ENCODE measurements at regions of chr11 and their contacts with region 1.

Region 1: DNA sequence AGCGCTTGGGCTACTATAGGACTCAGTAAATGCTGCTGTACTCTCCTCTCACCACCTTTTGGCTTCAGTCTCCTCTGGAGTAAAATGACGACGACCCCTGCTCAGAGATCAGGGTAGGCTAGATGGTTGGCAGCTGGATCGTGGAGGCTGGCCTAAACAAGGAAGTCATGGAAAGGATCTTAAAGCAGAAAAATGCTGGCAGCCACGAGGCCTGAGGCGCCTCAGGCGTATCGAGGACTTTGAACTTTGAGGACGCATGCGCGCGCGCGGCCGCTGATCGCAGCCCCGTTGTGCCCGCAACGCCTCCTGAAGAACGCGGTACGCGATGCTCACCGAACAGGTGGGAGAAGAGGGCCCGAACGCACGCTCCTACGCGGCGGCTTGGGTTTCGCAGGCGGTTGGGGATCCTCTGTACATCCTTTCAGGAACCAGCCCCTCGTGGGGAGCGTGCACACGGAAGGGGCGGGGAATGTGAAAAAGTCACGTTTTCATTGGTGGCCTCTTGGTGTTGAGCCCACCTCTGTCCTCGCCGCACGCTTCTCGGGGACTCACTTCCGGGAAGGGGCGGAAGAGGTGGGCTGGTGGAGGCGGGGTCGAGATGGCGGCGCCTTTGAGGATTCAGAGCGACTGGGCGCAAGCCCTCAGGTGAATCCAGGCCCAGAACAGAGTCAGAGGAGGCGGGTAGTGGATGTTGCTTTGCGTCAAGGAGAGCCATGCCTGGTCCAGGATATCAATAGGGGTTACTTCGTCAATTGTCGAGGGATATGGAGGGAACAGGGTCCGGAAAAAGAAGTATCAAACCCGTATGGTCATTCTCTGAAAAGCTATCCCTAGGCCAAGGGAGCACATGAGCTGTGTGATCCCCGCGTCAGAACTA is at the starts of genes COA4 and PAAF1:
- DNase-seq: peak; percentile 97
- H3K4me3 Mint-ChIP-seq: peak within 1 kb of the TSS; percentile 97
- H3K27ac Mint-ChIP-seq: peak within 1 kb of the TSS; percentile 94
- H3K4me1 Mint-ChIP-seq: peaks cover 33% of the 10 kb centered on the region
- H3K27me3 Mint-ChIP-seq: no peaks in the 10 kb centered on the region
- total RNA-seq, gene COA4: 89.5 to 91.6 TPM
- total RNA-seq, gene PAAF1: 29.9 to 33.8 TPM

Region 2: GRCh38 chr11:73376160-73376802 is 500.4 kb before region 1 on chr11 and contains the start of gene RELT:
- CTCF ChIA-PET with region 1: no interaction called
- POLR2A ChIA-PET with region 1: no interaction called
- intact Hi-C with region 1: loop called (anchors 2 kb)
- DNase-seq: peak; percentile 95
- H3K4me3 Mint-ChIP-seq: peak within 1 kb of the TSS; percentile 97
- H3K27ac Mint-ChIP-seq: peak within 1 kb of the TSS; percentile 95
- H3K4me1 Mint-ChIP-seq: peaks cover 39% of the 10 kb centered on the region
- H3K27me3 Mint-ChIP-seq: no peaks in the 10 kb centered on the region
- total RNA-seq, gene RELT: 18.5 to 18.9 TPM

Region 3: GRCh38 chr11:73760679-73761402 is 115.8 kb before region 1 on chr11 and contains the start of gene RAB6A:
- CTCF ChIA-PET with region 1: no interaction called
- POLR2A ChIA-PET with region 1: interaction called, 3 read pairs
- intact Hi-C with region 1: loop called (anchors 2 kb)
- DNase-seq: peak; percentile 100
- H3K4me3 Mint-ChIP-seq: peak within 1 kb of the TSS; percentile 85
- H3K27ac Mint-ChIP-seq: peak within 1 kb of the TSS; percentile 83
- H3K4me1 Mint-ChIP-seq: peaks cover 24% of the 10 kb centered on the region
- H3K27me3 Mint-ChIP-seq: no peaks in the 10 kb centered on the region
- total RNA-seq, gene RAB6A: 66.0 to 71.0 TPM

Region 4: GRCh38 chr11:73787643-73788537 is 88.8 kb before region 1 on chr11 and contains the start of gene MRPL48:
- CTCF ChIA-PET with region 1: no interaction called
- POLR2A ChIA-PET with region 1: interaction called, 3 read pairs
- intact Hi-C with region 1: loop called (anchors 2 kb)
- DNase-seq: peak; percentile 94
- H3K4me3 Mint-ChIP-seq: peak within 1 kb of the TSS; percentile 99
- H3K27ac Mint-ChIP-seq: peak within 1 kb of the TSS; percentile 97
- H3K4me1 Mint-ChIP-seq: peaks cover 18% of the 10 kb centered on the region
- H3K27me3 Mint-ChIP-seq: no peaks in the 10 kb centered on the region
- total RNA-seq, gene MRPL48: 43.4 to 45.7 TPM

Region 5: DNA sequence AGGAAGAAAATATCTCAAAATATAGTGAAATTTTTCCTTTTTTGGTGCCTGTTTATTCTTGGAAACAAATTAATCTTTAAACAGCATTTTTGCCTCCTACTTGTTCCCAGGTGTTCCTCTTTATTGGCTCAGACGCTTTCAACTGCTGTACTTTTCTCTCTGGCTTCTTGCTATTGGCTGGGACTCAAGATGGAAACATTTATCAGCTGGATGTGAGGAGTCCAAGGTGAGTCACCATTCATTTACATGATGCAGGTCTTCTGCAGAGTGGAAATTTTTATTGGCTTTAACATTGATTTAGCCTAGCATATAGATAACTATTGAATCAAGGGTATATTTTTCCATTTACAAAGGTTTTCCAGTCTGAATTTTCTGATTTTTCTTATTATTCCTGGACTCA is 39.8 kb after region 1 on chr11:
- CTCF ChIA-PET with region 1: no interaction called
- POLR2A ChIA-PET with region 1: no interaction called
- intact Hi-C with region 1: no loop called
- DNase-seq: no peak
- H3K4me3 Mint-ChIP-seq: no peak overlapping the region
- H3K27ac Mint-ChIP-seq: no peak overlapping the region
- H3K4me1 Mint-ChIP-seq: no peaks in the 10 kb centered on the region
- H3K27me3 Mint-ChIP-seq: no peaks in the 10 kb centered on the region

Measured in activated CD4-positive, alpha-beta memory T cell treated with anti-CD3 and anti-CD28 coated beads for 36 hours (primary cell).